ENCODE measurements at regions of chr5 and their contacts with region 1.

Region 1: GRCh38 chr5:172188033-172188892 is at the start of gene STK10:
- DNase-seq: peak; percentile 88
- H3K4me3 Mint-ChIP-seq: peak within 1 kb of the TSS; percentile 93
- H3K27ac Mint-ChIP-seq: peak within 1 kb of the TSS; percentile 94
- H3K4me1 Mint-ChIP-seq: peaks cover 25% of the 10 kb centered on the region
- H3K27me3 Mint-ChIP-seq: peaks cover 12% of the 10 kb centered on the region
- total RNA-seq, gene STK10: 102 and 105 TPM in 2 replicates

Region 2: DNA sequence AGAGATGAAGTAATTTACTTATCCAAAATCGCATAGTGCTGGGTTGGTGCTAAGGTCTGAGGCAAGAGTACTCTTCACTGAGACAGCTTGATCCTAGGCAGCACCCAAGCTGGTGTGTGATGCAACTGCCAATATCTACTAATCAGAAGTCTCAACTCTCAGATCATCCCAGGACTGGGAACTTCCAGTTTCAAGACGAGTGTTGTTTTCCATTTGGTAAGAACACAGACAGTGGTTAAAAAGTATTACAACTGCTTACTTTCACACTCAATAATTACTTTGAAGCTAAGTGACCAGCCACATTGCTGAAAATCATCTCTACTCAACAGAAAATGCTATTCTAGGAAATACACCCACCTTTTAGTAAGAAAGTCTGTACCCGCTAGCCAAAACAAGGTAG is 227.1 kb before region 1 on chr5:
- intact Hi-C with region 1: loop called (anchors 2 kb)
- DNase-seq: peak; percentile 15
- H3K4me3 Mint-ChIP-seq: no peak overlapping the region
- H3K27ac Mint-ChIP-seq: peak overlapping the region; percentile 65
- H3K4me1 Mint-ChIP-seq: peaks cover 69% of the 10 kb centered on the region
- H3K27me3 Mint-ChIP-seq: no peaks in the 10 kb centered on the region

Region 3: GRCh38 chr5:172065501-172065990 is 122.7 kb before region 1 on chr5:
- intact Hi-C with region 1: loop called (anchors 2 kb)
- DNase-seq: no peak
- H3K4me3 Mint-ChIP-seq: no peak overlapping the region
- H3K27ac Mint-ChIP-seq: no peak overlapping the region
- H3K4me1 Mint-ChIP-seq: peaks cover 34% of the 10 kb centered on the region
- H3K27me3 Mint-ChIP-seq: no peaks in the 10 kb centered on the region

Region 4: DNA sequence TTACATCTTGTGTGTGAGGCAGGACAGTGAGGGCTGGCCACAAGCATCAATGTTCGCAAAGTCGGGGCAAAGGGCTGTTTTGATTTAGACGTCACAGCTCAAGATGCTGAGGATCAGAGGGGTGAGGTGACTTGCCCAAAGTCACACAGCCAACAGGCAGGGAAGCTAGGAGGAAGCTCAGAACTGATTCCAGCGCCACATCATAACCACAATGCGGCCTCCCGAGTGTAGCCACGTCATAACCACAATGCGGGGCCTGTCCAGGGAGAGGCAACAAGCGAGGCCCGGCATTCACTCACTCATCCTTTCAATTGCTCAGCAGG is 14.5 kb before region 1 on chr5:
- intact Hi-C with region 1: loop called (anchors 1 kb)
- DNase-seq: peak; percentile 70
- H3K4me3 Mint-ChIP-seq: peak overlapping the region; percentile 84
- H3K27ac Mint-ChIP-seq: peak overlapping the region; percentile 79
- H3K4me1 Mint-ChIP-seq: peaks cover 82% of the 10 kb centered on the region
- H3K27me3 Mint-ChIP-seq: no peaks in the 10 kb centered on the region

Region 5: GRCh38 chr5:172283020-172283861 is 95.0 kb after region 1 on chr5 and contains the start of gene UBTD2:
- intact Hi-C with region 1: loop called (anchors 1 kb)
- DNase-seq: peak; percentile 79
- H3K4me3 Mint-ChIP-seq: peak within 1 kb of the TSS; percentile 89
- H3K27ac Mint-ChIP-seq: peak within 1 kb of the TSS; percentile 75
- H3K4me1 Mint-ChIP-seq: peaks cover 24% of the 10 kb centered on the region
- H3K27me3 Mint-ChIP-seq: peaks cover 25% of the 10 kb centered on the region
- total RNA-seq, gene UBTD2: 6.6 TPM in 2 replicates

Region 6: GRCh38 chr5:172334196-172334595 is 145.9 kb after region 1 on chr5:
- intact Hi-C with region 1: no loop called
- DNase-seq: no peak
- H3K4me3 Mint-ChIP-seq: no peak overlapping the region
- H3K27ac Mint-ChIP-seq: no peak overlapping the region
- H3K4me1 Mint-ChIP-seq: no peaks in the 10 kb centered on the region
- H3K27me3 Mint-ChIP-seq: no peaks in the 10 kb centered on the region